Common myeloid progenitor, CD34-positive (primary cell): ENCODE measurements at regions of chr9 and their contacts with region 1.

Region 1: DNA sequence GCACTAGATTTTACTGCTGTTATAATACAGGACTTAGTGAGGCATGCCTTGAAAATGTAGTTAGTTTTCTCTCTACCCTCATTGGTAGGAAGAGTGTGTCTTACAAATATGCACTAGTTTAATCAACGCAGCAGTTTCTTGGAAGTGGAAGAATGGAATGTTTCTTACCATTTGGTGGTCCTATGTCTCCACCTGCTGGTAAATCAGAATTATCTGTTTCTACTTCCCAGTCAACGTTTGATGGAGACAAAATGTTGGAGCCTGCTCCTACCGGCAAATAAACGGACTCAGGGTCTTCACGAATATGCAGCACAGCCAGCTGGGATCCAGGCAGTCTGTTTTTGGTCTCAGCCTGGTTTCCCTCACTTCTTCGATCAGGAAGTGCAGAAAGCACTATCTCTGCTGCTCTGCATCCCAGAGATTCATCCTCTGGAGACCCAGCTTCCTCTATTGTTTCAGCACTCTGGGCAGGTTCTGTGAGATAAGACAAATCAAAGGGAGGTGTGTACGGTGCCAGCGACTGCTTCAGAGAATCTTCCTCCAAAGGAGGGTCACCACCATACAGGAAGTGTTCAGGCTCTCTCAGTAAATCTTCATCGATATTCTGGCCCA is 59.5 kb upstream of the PCA3 start:
- DNase-seq: peak; percentile 88 to 92 (median 88)
- H3K4me3 ChIP-seq: peak overlapping the region in 1 of 7 experiments; percentile 43
- H3K27ac ChIP-seq: no peak overlapping the region
- H3K4me1 ChIP-seq: peaks cover 0 to 5% (median 2%) of the 10 kb centered on the region in 4 experiments
- H3K27me3 ChIP-seq: peaks cover 0 to 11% (median 5%) of the 10 kb centered on the region in 5 experiments

Region 2: GRCh38 chr9:76403352-76403751 is 301.3 kb before region 1 on chr9:
- CTCF ChIA-PET with region 1: interaction called, 29 read pairs
- POLR2A ChIA-PET with region 1: no interaction called
- DNase-seq: peak; percentile 78 to 90 (median 88)
- H3K4me3 ChIP-seq: peak overlapping the region in 3 of 7 experiments; percentile 7 to 63 (median 37)
- H3K27ac ChIP-seq: peak overlapping the region in 1 of 2 experiments; percentile 67
- H3K4me1 ChIP-seq: peaks cover 0 to 13% (median 4%) of the 10 kb centered on the region in 4 experiments
- H3K27me3 ChIP-seq: no peaks in the 10 kb centered on the region

Region 3: GRCh38 chr9:76658535-76659231 is 46.0 kb before region 1 on chr9:
- CTCF ChIA-PET with region 1: interaction called, 28 read pairs
- POLR2A ChIA-PET with region 1: no interaction called
- DNase-seq: peak; percentile 69 to 82 (median 82)
- H3K4me3 ChIP-seq: no peak overlapping the region
- H3K27ac ChIP-seq: no peak overlapping the region
- H3K4me1 ChIP-seq: peaks cover 35 to 58% (median 52%) of the 10 kb centered on the region in 4 experiments
- H3K27me3 ChIP-seq: no peaks in the 10 kb centered on the region

Region 4: DNA sequence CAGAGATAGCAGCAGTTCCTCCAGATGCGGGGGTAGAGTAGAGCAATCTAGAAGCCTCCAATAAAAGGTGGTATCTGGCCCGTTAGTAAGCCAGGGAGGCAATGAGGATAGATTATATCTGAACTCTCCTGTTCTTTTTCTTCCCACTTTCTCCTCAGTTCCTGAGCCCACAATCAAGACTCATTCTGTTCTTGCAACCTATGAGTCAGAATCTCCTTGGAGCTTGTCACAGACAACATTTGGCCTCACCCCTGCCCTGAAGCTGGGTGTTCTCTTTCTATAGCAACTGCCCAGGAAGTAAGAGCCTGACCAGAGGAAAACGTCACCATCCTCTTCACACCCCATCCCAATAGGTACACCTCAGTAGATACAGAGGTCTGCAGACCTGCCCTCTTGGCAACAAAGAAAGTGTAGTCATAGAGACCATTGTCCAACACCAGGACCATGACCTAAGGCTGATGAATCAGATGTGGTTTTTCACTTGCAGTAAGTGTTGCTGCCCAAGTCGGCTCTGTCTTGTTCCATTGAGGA is 16.8 kb before region 1 on chr9:
- CTCF ChIA-PET with region 1: interaction called, 34 read pairs
- POLR2A ChIA-PET with region 1: no interaction called
- DNase-seq: peak in 2 of 3 donors; percentile 15 to 34
- H3K4me3 ChIP-seq: no peak overlapping the region
- H3K27ac ChIP-seq: no peak overlapping the region
- H3K4me1 ChIP-seq: peaks cover 5 to 9% (median 6%) of the 10 kb centered on the region in 4 experiments
- H3K27me3 ChIP-seq: peaks cover 0 to 4% (median 0%) of the 10 kb centered on the region in 5 experiments